PC-9 (cell line): ENCODE measurements at regions of chr12 and their contacts with region 1.

Region 1: DNA sequence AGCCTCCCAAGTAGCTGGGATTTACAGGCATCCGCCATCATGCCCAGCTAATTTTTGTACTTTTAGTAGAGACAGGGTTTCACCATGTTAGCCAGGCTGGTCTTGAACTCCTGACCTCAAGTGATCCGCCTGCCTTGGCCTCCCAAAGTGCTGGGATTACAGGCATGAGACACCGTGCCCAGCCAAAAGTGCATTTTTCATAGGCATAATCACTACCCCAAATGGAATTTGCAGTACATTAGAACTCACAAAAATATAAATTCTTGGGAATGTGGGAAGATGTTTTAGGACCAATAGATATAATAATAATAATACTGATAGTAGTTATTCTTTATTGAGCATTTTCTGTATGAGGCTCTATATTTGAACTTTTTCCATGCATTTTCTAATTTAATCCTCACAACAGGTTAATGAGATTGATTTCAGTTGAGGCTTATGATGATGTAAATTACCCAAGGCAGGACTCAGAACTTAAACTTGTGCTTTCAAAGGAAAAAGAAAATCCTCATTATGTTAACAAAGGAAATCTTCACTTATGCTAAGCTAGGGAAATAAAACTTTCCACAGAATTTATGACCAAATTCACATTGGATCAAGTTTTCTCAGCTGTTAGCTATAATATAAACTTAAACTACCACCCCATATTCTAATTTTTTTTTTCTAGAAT is 121.6 kb downstream of the SRGAP1 start:
- DNase-seq: no peak
- H3K4me3 ChIP-seq: no peak overlapping the region
- H3K27ac ChIP-seq: no peak overlapping the region
- H3K4me1 ChIP-seq: no peaks in the 10 kb centered on the region
- H3K27me3 ChIP-seq: no peaks in the 10 kb centered on the region
- CTCF ChIP-seq: no peak

Region 2: GRCh38 chr12:64029013-64029857 is 63.2 kb after region 1 on chr12:
- CTCF ChIA-PET with region 1: no interaction called
- POLR2A ChIA-PET with region 1: no interaction called
- intact Hi-C with region 1: no loop called
- DNase-seq: no peak
- H3K4me3 ChIP-seq: no peak overlapping the region
- H3K27ac ChIP-seq: no peak overlapping the region
- H3K4me1 ChIP-seq: no peaks in the 10 kb centered on the region
- H3K27me3 ChIP-seq: no peaks in the 10 kb centered on the region
- CTCF ChIP-seq: no peak

Region 3: GRCh38 chr12:64419696-64420095 is 453.6 kb after region 1 on chr12:
- CTCF ChIA-PET with region 1: no interaction called
- POLR2A ChIA-PET with region 1: interaction called, 24 read pairs
- intact Hi-C with region 1: no loop called
- DNase-seq: no peak
- H3K4me3 ChIP-seq: no peak overlapping the region
- H3K27ac ChIP-seq: no peak overlapping the region
- H3K4me1 ChIP-seq: no peaks in the 10 kb centered on the region
- H3K27me3 ChIP-seq: no peaks in the 10 kb centered on the region
- CTCF ChIP-seq: no peak